ENCODE measurements at regions of chr2 and their contacts with region 1.

Region 1: DNA sequence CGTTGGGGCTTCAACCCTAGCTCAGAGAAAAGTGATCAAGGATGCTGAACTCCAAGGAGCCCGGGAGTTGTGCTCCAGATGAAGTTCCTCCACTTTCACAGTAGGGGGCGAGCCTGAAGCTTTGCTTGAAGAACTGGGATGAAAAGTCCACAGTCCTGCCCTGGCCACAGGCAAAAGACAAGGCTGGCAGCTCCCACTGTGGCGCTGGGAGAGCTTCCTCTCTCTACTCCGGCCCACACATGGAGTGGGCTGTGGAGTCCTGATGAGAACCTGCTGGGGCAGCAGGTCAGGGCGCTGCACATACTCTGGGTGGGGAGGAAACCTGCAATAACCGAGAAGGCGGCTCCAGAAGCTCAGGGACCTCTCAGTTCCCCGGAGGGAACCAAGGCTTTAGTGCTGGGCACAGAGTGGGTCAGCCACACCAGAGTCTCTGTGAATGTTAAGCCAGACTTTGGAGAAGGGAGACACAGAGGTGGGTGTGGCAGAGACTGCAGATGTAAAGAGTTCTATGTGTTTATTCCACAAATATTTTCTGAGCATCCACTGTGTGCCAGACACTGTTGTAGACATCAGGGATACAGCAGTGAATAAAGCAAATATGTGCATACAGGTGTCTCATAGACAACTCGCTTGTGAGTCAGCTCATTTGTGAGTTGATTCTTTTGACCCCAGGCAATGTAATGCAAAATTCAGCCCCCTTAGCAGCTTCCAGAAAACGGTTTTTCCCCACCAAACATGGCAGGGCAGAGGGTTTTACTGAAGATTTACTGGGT is 48.0 kb upstream of the MRPL33 start:
- DNase-seq: no peak
- H3K4me3 ChIP-seq: no peak overlapping the region
- CTCF ChIP-seq: peak; percentile 83

Region 2: GRCh38 chr2:25920326-25920725 is 1803.2 kb before region 1 on chr2:
- CTCF ChIA-PET with region 1: no interaction called
- POLR2A ChIA-PET with region 1: no interaction called
- DNase-seq: no peak
- H3K4me3 ChIP-seq: no peak overlapping the region
- CTCF ChIP-seq: no peak

Region 3: GRCh38 chr2:27582695-27583389 is 140.7 kb before region 1 on chr2 and contains the start of gene ZNF512:
- CTCF ChIA-PET with region 1: no interaction called
- POLR2A ChIA-PET with region 1: no interaction called
- DNase-seq: peak; percentile 38
- H3K4me3 ChIP-seq: peak within 1 kb of the TSS; percentile 82
- CTCF ChIP-seq: no peak

Region 4: DNA sequence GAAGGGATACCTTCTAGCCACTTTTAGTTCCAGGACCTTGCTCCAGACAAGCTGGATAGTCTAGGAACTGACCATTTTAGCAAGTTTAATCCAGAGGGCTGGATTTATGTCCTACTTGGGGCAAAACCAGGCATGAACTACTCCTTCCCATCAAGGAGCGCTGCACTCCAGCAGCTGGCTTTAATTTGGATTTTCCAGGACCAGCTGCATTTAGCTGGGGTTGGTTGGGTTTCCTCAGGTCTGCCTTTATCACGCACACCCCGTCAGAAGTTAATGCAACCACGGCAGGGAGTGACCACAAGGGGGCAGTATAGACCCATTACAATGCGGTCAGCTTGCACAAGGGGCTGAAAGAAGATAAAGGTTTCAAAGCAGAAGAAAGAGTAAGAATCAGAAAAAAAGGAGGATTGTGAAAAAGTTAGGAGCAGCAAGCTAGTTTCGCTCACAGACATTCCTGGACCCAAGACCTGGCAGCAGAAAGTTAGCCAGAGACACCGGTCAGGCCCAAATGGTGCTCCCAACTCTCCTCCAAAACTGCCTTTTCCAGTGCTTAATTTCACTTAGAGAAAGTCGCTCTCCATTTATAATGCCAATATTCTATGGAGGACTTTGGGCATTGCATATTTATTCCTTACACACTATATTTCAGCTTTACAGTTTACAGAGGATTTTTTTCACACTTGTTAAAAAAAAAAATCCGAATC is 19.8 kb before region 1 on chr2:
- CTCF ChIA-PET with region 1: interaction called, 66 read pairs
- POLR2A ChIA-PET with region 1: no interaction called
- DNase-seq: peak; percentile 82
- H3K4me3 ChIP-seq: no peak overlapping the region
- CTCF ChIP-seq: peak; percentile 79

Region 5: GRCh38 chr2:27735263-27735953 is 11.8 kb after region 1 on chr2:
- CTCF ChIA-PET with region 1: interaction called, 84 read pairs
- POLR2A ChIA-PET with region 1: no interaction called
- DNase-seq: no peak
- H3K4me3 ChIP-seq: peak overlapping the region; percentile 38
- CTCF ChIP-seq: no peak

Region 6: GRCh38 chr2:28096421-28096820 is 372.9 kb after region 1 on chr2:
- CTCF ChIA-PET with region 1: interaction called, 10 read pairs
- POLR2A ChIA-PET with region 1: no interaction called
- DNase-seq: no peak
- H3K4me3 ChIP-seq: no peak overlapping the region
- CTCF ChIP-seq: no peak

Region 7: DNA sequence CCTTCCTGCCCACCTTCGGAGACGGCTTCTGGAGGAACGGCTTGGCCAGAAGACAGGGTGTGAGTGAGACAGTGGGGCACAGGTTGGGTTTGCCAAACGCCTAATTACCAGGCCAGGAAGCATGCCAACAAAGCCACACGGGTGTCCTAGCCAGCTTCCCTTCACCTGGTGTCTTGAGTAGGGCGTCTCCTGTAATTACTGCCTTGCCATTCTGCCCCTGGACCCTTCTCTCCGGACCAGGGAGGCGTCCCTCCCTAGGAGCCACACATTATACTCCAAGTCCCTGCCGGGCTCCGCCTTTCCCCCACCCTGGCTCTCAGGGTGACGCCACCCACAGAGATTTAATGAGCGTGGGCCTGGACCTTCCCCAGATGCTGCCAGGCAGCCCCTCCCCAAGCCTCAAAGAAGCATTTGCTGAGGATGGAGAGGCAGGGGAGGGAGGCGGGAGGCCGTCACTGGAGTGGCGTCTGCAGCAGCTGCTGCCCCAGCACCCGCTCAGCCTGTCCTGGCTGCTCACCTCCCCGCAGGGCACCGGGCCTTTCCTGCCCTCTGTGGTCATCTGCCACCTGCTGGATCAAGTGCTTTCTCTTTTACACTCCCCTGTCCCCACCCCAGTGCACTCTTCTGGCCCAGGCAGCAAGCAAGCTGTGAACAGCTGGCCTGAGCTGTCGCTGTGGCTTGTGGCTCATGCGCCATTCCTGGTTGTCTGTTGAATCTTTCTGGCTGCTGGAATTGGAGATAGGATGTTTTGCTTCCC is 689.8 kb after region 1 on chr2:
- CTCF ChIA-PET with region 1: interaction called, 10 read pairs
- POLR2A ChIA-PET with region 1: no interaction called
- DNase-seq: no peak
- H3K4me3 ChIP-seq: no peak overlapping the region
- CTCF ChIP-seq: no peak

Region 8: GRCh38 chr2:28452534-28453081 is 729.0 kb after region 1 on chr2:
- CTCF ChIA-PET with region 1: interaction called, 14 read pairs
- POLR2A ChIA-PET with region 1: no interaction called
- DNase-seq: no peak
- H3K4me3 ChIP-seq: no peak overlapping the region
- CTCF ChIP-seq: peak; percentile 97

Measured in AG04449 (cell line).